Activated CD8-positive, alpha-beta memory T cell treated with anti-CD3 and anti-CD28 coated beads, Interleukin-2, amount 10 ng/mL, durations not matched to agents 7 days and 5 days (primary cell): ENCODE measurements at regions of chr9 and their contacts with region 1.

Region 1: GRCh38 chr9:136728080-136728547 is 14.6 kb downstream of the LCN10 start:
- DNase-seq: peak; percentile 92
- ATAC-seq: peak; percentile 79
- H3K4me3 Mint-ChIP-seq: peak overlapping the region; percentile 92
- H3K27ac Mint-ChIP-seq: no peak overlapping the region
- H3K4me1 Mint-ChIP-seq: peaks cover 38% of the 10 kb centered on the region
- H3K27me3 Mint-ChIP-seq: peaks cover 4% of the 10 kb centered on the region

Region 2: GRCh38 chr9:136686794-136687711 is 41.1 kb before region 1 on chr9 and contains the start of gene AGPAT2:
- CTCF ChIA-PET with region 1: interaction called, 11 read pairs
- DNase-seq: peak; percentile 79
- ATAC-seq: peak; percentile 90
- H3K4me3 Mint-ChIP-seq: peak within 1 kb of the TSS; percentile 67
- H3K27ac Mint-ChIP-seq: peak within 1 kb of the TSS; percentile 59
- H3K4me1 Mint-ChIP-seq: peaks cover 13% of the 10 kb centered on the region
- H3K27me3 Mint-ChIP-seq: peaks cover 10% of the 10 kb centered on the region
- total RNA-seq, gene AGPAT2: 16.9 to 20.5 TPM

Region 3: DNA sequence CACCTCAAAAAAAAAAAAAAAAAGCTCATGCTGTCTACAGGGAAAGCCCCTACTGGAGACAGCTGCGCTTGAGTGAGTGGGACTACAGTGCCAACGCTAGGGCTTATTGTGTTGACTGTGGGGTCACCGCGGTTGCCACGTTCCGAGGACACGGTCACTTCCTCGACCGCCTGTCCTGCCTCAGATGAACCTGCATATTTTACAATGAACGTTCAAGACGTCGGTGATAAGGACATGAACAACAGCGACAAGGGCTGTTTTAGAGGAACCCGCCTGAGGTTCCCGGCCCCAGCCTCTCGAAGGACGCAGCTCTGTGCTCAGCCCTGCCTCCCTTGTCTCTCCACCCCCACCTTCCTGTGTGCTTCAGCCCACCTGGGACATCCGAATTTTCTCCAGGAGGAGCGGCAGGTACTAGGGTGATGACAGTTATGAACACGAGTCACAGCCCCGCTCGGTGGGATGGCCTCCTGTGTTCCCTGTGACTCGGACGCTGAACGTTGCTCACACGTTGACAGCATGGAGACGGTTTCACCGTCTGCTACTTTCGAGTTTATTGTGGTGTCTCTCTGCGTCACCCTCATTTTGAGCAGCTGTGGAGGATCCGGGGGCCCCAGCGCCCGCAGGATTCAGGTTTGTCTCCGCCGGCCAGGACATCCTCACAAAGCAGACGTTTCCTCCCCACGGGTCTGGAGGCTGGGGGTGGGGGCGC is 27.0 kb before region 1 on chr9:
- CTCF ChIA-PET with region 1: interaction called, 30 read pairs
- DNase-seq: peak; percentile 84
- ATAC-seq: peak; percentile 92
- H3K4me3 Mint-ChIP-seq: peak overlapping the region; percentile 66
- H3K27ac Mint-ChIP-seq: peak overlapping the region; percentile 81
- H3K4me1 Mint-ChIP-seq: peaks cover 29% of the 10 kb centered on the region
- H3K27me3 Mint-ChIP-seq: peaks cover 32% of the 10 kb centered on the region

Region 4: GRCh38 chr9:136709454-136710109 is 18.5 kb before region 1 on chr9:
- CTCF ChIA-PET with region 1: interaction called, 10 read pairs
- DNase-seq: no peak
- ATAC-seq: no peak
- H3K4me3 Mint-ChIP-seq: no peak overlapping the region
- H3K27ac Mint-ChIP-seq: no peak overlapping the region
- H3K4me1 Mint-ChIP-seq: peaks cover 3% of the 10 kb centered on the region
- H3K27me3 Mint-ChIP-seq: peaks cover 51% of the 10 kb centered on the region

Region 5: GRCh38 chr9:136742591-136743391 is 14.7 kb after region 1 on chr9 and contains the start of gene LCN10:
- CTCF ChIA-PET with region 1: interaction called, 12 read pairs
- DNase-seq: no peak
- ATAC-seq: no peak
- H3K4me3 Mint-ChIP-seq: no peak within 1 kb of the TSS
- H3K27ac Mint-ChIP-seq: no peak within 1 kb of the TSS
- H3K4me1 Mint-ChIP-seq: peaks cover 6% of the 10 kb centered on the region
- H3K27me3 Mint-ChIP-seq: peaks cover 15% of the 10 kb centered on the region
- total RNA-seq, gene LCN10: 0.68 TPM in 1 of 2 experiments, not detected in the other